Mammary epithelial cell (primary cell): ENCODE measurements at regions of chr4 and their contacts with region 1.

Region 1: GRCh38 chr4:26404743-26405206 is 84.0 kb downstream of the RBPJ start:
- DNase-seq: no peak
- H3K4me3 ChIP-seq: no peak overlapping the region
- H3K27ac ChIP-seq: no peak overlapping the region
- H3K4me1 ChIP-seq: no peaks in the 10 kb centered on the region
- H3K27me3 ChIP-seq: no peaks in the 10 kb centered on the region
- CTCF ChIP-seq: no peak

Region 2: DNA sequence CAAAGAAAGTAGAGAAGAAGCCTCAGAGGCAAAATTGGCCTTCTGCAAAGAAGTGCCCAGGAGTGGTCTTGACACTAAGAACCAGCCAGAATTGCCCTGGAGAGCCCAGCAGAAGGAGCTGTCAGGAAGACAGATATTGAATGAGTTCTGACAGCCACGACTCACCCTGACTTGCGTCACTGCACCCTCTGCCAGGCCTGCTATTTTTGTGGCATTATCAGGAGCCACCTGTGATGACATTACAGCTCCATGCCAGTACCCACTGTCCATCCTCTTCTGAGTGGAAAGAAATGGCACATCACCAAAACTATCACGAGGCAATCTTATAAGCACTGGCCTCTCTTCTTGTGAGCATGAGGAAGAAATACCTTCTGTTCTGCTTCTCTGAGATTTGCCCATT is 423.0 kb before region 1 on chr4:
- CTCF ChIA-PET with region 1: no interaction called
- dilution Hi-C with region 1: no loop called
- in situ Hi-C with region 1: loop called (anchors 10 to 25 kb)
- intact Hi-C with region 1: no loop called
- DNase-seq: no peak
- H3K4me3 ChIP-seq: no peak overlapping the region
- H3K27ac ChIP-seq: no peak overlapping the region
- H3K4me1 ChIP-seq: no peaks in the 10 kb centered on the region
- H3K27me3 ChIP-seq: no peaks in the 10 kb centered on the region
- CTCF ChIP-seq: no peak

Region 3: GRCh38 chr4:26061248-26061986 is 343.4 kb before region 1 on chr4:
- CTCF ChIA-PET with region 1: no interaction called
- dilution Hi-C with region 1: no loop called
- in situ Hi-C with region 1: no loop called
- intact Hi-C with region 1: no loop called
- DNase-seq: peak; percentile 32
- H3K4me3 ChIP-seq: no peak overlapping the region
- H3K27ac ChIP-seq: no peak overlapping the region
- H3K4me1 ChIP-seq: peaks cover 4% of the 10 kb centered on the region
- H3K27me3 ChIP-seq: peaks cover 6% of the 10 kb centered on the region
- CTCF ChIP-seq: peak; percentile 49 to 64

Region 4: DNA sequence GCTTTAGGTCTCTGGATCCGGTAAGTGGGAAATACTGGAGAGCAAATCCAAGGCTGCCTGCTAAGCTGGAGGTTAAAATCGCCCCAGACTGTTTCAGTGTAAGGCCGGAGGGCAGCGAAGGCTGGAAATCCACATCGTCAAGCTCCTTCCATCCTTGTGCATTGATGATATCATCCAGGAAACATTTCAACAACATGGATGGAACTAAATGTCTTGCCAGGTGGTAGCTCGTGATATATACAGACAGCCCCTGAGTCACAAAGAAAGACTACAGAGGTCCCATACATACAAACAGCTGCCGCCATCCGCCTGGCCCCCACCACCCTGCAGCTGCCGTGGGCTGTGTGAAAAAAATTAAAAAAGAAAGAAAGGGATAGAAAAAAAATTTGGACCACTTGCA is 232.8 kb before region 1 on chr4:
- CTCF ChIA-PET with region 1: no interaction called
- dilution Hi-C with region 1: no loop called
- in situ Hi-C with region 1: no loop called
- intact Hi-C with region 1: no loop called
- DNase-seq: no peak
- H3K4me3 ChIP-seq: no peak overlapping the region
- H3K27ac ChIP-seq: no peak overlapping the region
- H3K4me1 ChIP-seq: no peaks in the 10 kb centered on the region
- H3K27me3 ChIP-seq: peaks cover 6% of the 10 kb centered on the region
- CTCF ChIP-seq: no peak

Region 5: GRCh38 chr4:26330186-26330787 is 74.5 kb before region 1 on chr4:
- CTCF ChIA-PET with region 1: interaction called, 7 read pairs
- dilution Hi-C with region 1: no loop called
- in situ Hi-C with region 1: loop called (anchors 10 kb)
- intact Hi-C with region 1: no loop called
- DNase-seq: peak; percentile 34
- H3K4me3 ChIP-seq: no peak overlapping the region
- H3K27ac ChIP-seq: no peak overlapping the region
- H3K4me1 ChIP-seq: peaks cover 14% of the 10 kb centered on the region
- H3K27me3 ChIP-seq: no peaks in the 10 kb centered on the region
- CTCF ChIP-seq: peak; percentile 55 to 64